ENCODE measurements at regions of chr17 and their contacts with region 1.

Region 1: DNA sequence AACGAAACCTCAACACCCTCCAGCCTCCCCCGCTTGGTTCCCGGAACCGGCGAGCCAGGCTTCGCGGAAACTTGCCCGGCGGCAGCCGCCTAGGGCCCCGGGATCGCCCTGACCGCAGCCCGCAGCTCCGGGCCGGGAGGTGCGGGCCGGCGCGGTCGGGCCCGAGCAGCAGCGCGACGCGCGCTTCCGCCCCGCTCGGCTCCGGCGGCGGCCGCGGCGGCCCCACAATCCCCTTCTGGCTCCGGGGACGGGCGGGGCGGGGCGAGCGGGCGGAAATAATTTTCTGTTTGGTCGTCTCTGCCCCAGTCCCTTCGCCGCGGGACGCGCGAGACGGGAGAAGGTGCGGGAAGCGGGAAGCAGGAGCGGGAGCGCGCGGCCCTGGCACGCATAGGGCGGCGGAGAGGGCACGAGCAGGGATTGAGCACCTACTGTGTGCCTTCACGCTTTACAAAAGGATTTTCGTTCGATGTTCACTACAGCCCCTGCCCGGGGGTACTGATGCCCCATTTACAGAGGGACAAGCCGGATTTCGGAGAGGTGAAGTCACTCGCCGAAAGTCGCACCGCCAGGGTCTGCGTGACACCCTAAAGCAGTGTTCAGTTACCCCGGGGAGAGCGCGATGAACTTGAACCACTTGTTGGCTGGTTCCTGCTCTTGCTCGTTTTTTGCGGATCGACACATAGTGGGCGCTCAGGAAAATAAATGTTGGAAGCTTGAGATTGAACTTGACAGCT is 2.7 kb upstream of the MLLT6 start:
- DNase-seq: peak; percentile 75
- H3K4me3 Mint-ChIP-seq: peak overlapping the region; percentile 97
- H3K27ac Mint-ChIP-seq: peak overlapping the region; percentile 99
- H3K4me1 Mint-ChIP-seq: peaks cover 65% of the 10 kb centered on the region
- H3K27me3 Mint-ChIP-seq: no peaks in the 10 kb centered on the region

Region 2: GRCh38 chr17:38654411-38655398 is 47.6 kb before region 1 on chr17:
- intact Hi-C with region 1: no loop called
- DNase-seq: no peak
- H3K4me3 Mint-ChIP-seq: no peak overlapping the region
- H3K27ac Mint-ChIP-seq: no peak overlapping the region
- H3K4me1 Mint-ChIP-seq: peaks cover 11% of the 10 kb centered on the region
- H3K27me3 Mint-ChIP-seq: peaks cover 8% of the 10 kb centered on the region

Region 3: GRCh38 chr17:38715216-38715943 is 13.0 kb after region 1 on chr17:
- intact Hi-C with region 1: loop called (anchors 1 kb)
- DNase-seq: no peak
- H3K4me3 Mint-ChIP-seq: peak overlapping the region; percentile 34
- H3K27ac Mint-ChIP-seq: peak overlapping the region; percentile 88
- H3K4me1 Mint-ChIP-seq: peaks cover 46% of the 10 kb centered on the region
- H3K27me3 Mint-ChIP-seq: no peaks in the 10 kb centered on the region

Region 4: DNA sequence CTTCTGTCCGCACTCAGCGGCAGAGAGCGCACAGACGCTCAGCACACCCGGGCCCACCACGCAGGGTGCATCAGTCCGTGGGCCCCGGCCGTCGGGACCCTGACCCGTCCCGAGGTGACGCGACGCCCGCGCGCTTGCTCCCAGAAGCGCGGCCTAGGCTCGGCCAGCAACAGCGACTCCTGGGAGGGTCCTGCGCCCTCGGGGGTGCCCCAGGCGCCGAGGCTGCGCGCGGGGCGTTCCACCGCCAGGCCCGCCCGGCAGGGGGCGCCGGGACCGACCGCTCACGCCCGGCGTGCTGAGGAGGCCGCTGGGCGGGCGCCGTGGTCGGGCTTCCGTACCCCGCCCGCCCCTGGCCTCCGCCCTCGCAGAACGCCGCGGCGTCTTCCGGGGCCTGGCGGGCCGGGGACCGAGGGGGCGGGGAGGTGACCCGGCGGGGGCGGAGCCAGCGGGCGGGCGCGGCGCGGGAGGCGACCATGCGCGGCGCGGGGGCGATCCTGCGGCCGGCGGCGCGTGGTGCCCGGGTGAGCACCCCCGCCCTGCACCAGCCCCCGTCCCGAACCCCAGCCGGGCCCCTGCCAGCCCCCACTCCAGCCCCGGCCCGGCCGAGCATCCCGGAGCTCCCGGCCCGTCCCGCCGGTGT is 27.7 kb after region 1 on chr17 and contains the start of gene CISD3:
- intact Hi-C with region 1: loop called (anchors 1 kb)
- DNase-seq: peak; percentile 88
- H3K4me3 Mint-ChIP-seq: peak within 1 kb of the TSS; percentile 94
- H3K27ac Mint-ChIP-seq: peak within 1 kb of the TSS; percentile 97
- H3K4me1 Mint-ChIP-seq: peaks cover 82% of the 10 kb centered on the region
- H3K27me3 Mint-ChIP-seq: peaks cover 2% of the 10 kb centered on the region
- total RNA-seq, gene CISD3: 39.2 and 41.4 TPM in 2 replicates

Region 5: DNA sequence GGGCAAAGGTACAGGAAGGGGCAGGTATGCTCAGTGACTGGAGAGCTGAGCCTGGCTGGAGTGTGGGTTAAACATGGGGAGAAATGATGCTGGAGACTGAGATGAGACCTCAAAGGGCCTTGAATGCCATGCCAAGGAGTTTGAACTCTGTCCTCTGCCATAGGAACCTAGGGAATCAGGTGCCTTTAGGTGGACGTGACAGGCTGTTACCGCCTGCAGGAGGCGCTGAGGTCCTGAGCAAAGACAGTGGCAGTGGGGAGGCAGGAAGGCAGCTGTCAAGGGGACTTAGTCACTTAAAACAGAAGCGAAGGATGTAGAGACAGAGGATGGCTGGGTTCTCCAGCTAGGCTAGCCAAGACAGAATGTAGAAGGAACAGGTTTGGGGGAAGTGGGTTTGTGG is 59.3 kb after region 1 on chr17:
- intact Hi-C with region 1: no loop called
- DNase-seq: no peak
- H3K4me3 Mint-ChIP-seq: no peak overlapping the region
- H3K27ac Mint-ChIP-seq: no peak overlapping the region
- H3K4me1 Mint-ChIP-seq: peaks cover 20% of the 10 kb centered on the region
- H3K27me3 Mint-ChIP-seq: no peaks in the 10 kb centered on the region